Activated CD8-positive, alpha-beta T cell treated with anti-CD3 and anti-CD28 coated beads, Interleukin-2, amount 10 ng/mL, durations not matched to agents 7 days and 5 days (primary cell): ENCODE measurements at regions of chr17 and their contacts with region 1.

Region 1: GRCh38 chr17:78781948-78782916 is at the start of gene CYTH1:
- DNase-seq: peak; percentile 98
- ATAC-seq: peak; percentile 59
- H3K4me3 Mint-ChIP-seq: peak within 1 kb of the TSS; percentile 81
- H3K27ac Mint-ChIP-seq: peak within 1 kb of the TSS; percentile 95
- H3K4me1 Mint-ChIP-seq: peaks cover 54% of the 10 kb centered on the region
- H3K27me3 Mint-ChIP-seq: no peaks in the 10 kb centered on the region
- total RNA-seq, gene CYTH1: 137 to 138 TPM

Region 2: GRCh38 chr17:78736526-78737079 is 45.6 kb before region 1 on chr17:
- CTCF ChIA-PET with region 1: interaction called, 7 read pairs
- POLR2A ChIA-PET with region 1: interaction called, 15 read pairs
- DNase-seq: peak; percentile 71
- ATAC-seq: peak; percentile 86
- H3K4me3 Mint-ChIP-seq: peak overlapping the region; percentile 83
- H3K27ac Mint-ChIP-seq: peak overlapping the region; percentile 91
- H3K4me1 Mint-ChIP-seq: peaks cover 87% of the 10 kb centered on the region
- H3K27me3 Mint-ChIP-seq: no peaks in the 10 kb centered on the region

Region 3: GRCh38 chr17:78769196-78769773 is 12.9 kb before region 1 on chr17:
- CTCF ChIA-PET with region 1: interaction called, 13 read pairs
- POLR2A ChIA-PET with region 1: interaction called, 35 read pairs
- DNase-seq: no peak
- ATAC-seq: peak; percentile 21
- H3K4me3 Mint-ChIP-seq: no peak overlapping the region
- H3K27ac Mint-ChIP-seq: no peak overlapping the region
- H3K4me1 Mint-ChIP-seq: peaks cover 39% of the 10 kb centered on the region
- H3K27me3 Mint-ChIP-seq: no peaks in the 10 kb centered on the region

Region 4: GRCh38 chr17:78798695-78799559 is 16.7 kb after region 1 on chr17:
- CTCF ChIA-PET with region 1: interaction called, 14 read pairs
- POLR2A ChIA-PET with region 1: no interaction called
- DNase-seq: no peak
- ATAC-seq: no peak
- H3K4me3 Mint-ChIP-seq: no peak overlapping the region
- H3K27ac Mint-ChIP-seq: peak overlapping the region; percentile 74
- H3K4me1 Mint-ChIP-seq: peaks cover 43% of the 10 kb centered on the region
- H3K27me3 Mint-ChIP-seq: no peaks in the 10 kb centered on the region

Region 5: DNA sequence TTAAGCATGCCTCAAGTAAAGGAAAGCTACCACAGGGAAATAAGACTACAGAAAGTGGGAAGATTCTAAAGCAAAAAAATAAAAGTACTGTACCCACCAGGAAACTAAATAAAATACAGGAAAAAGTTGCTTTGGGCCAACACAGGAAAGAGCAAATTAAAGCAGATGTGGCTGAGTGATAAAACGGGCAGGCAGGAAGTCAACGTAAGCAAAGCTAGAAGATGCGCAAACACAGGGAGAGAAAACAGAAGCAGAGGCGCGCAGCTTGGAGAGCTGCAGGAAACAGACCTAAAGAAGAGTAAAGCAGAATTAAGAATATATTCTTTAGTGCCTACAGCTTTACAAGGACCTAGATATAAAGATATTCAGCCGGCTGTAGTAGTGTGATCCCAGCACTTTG is 36.7 kb after region 1 on chr17:
- CTCF ChIA-PET with region 1: interaction called, 8 read pairs
- POLR2A ChIA-PET with region 1: interaction called, 18 read pairs
- DNase-seq: peak; percentile 78
- ATAC-seq: peak; percentile 58
- H3K4me3 Mint-ChIP-seq: peak overlapping the region; percentile 58
- H3K27ac Mint-ChIP-seq: peak overlapping the region; percentile 90
- H3K4me1 Mint-ChIP-seq: peaks cover 65% of the 10 kb centered on the region
- H3K27me3 Mint-ChIP-seq: no peaks in the 10 kb centered on the region

Region 6: GRCh38 chr17:79147746-79148506 is 365.7 kb after region 1 on chr17:
- CTCF ChIA-PET with region 1: no interaction called
- POLR2A ChIA-PET with region 1: no interaction called
- DNase-seq: no peak
- ATAC-seq: no peak
- H3K4me3 Mint-ChIP-seq: no peak overlapping the region
- H3K27ac Mint-ChIP-seq: no peak overlapping the region
- H3K4me1 Mint-ChIP-seq: no peaks in the 10 kb centered on the region
- H3K27me3 Mint-ChIP-seq: no peaks in the 10 kb centered on the region